ENCODE measurements at regions of chr5 and their contacts with region 1.

Region 1: DNA sequence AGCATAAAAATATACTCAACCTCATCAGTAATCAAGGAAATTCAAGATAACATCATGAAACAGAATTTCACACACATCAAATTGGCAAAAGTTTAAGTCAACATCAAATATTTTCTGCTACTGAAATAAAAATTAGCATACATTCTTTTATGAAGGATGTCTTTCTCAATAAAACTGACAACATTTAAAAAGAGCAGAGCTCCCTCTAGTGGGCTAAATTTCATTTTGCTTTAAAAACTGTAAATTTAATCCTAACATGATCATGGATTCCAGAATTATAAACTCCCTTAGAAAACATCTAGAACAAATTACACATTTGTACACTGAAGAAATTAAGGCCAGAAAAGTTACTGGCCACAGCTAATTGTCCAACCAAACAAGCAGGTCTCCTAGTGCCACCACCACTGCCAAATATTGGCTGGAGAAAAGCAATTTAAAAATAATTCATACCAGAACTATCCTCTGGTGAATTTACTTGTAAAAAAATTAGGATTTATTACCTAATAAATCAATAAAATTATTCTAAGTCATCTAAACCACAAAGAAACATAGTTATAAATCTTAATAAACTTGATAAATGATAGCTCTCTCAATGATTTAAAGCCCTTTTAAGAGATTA is 31.2 kb downstream of the DEPDC1B start:
- DNase-seq: peak in 1 of 2 experiments; percentile 38
- H3K4me3 ChIP-seq: no peak overlapping the region
- H3K4me3 Mint-ChIP-seq: no peak overlapping the region
- H3K27ac Mint-ChIP-seq: no peak overlapping the region
- H3K4me1 ChIP-seq: peaks cover 39% of the 10 kb centered on the region
- H3K4me1 Mint-ChIP-seq: peaks cover 33% of the 10 kb centered on the region
- H3K27me3 ChIP-seq: no peaks in the 10 kb centered on the region
- H3K27me3 Mint-ChIP-seq: no peaks in the 10 kb centered on the region
- CTCF ChIP-seq: peak; percentile 45 to 50

Region 2: GRCh38 chr5:59810041-59810440 is 858.8 kb before region 1 on chr5:
- CTCF ChIA-PET with region 1: no interaction called
- POLR2A ChIA-PET with region 1: no interaction called
- intact Hi-C with region 1: loop called (anchors 5 kb)
- DNase-seq: peak; percentile 60 to 61
- H3K4me3 ChIP-seq: no peak overlapping the region
- H3K4me3 Mint-ChIP-seq: peak overlapping the region; percentile 17
- H3K27ac Mint-ChIP-seq: no peak overlapping the region
- H3K4me1 ChIP-seq: 0 out of 2 replicates have a peak, but pooled peaks cover 5% of the 10 kb centered on the region
- H3K4me1 Mint-ChIP-seq: peaks cover 6% of the 10 kb centered on the region
- H3K27me3 ChIP-seq: no peaks in the 10 kb centered on the region
- H3K27me3 Mint-ChIP-seq: peaks cover 12% of the 10 kb centered on the region
- CTCF ChIP-seq: peak; percentile 89 to 94

Region 3: GRCh38 chr5:60649283-60649917 is 19.4 kb before region 1 on chr5:
- CTCF ChIA-PET with region 1: interaction called, 4 read pairs
- POLR2A ChIA-PET with region 1: no interaction called
- intact Hi-C with region 1: loop called (anchors 1 kb)
- DNase-seq: peak in 1 of 2 experiments; percentile 48
- H3K4me3 ChIP-seq: no peak overlapping the region
- H3K4me3 Mint-ChIP-seq: no peak overlapping the region
- H3K27ac Mint-ChIP-seq: no peak overlapping the region
- H3K4me1 ChIP-seq: 0 out of 2 replicates have a peak, but pooled peaks cover 5% of the 10 kb centered on the region
- H3K4me1 Mint-ChIP-seq: peaks cover 15% of the 10 kb centered on the region
- H3K27me3 ChIP-seq: no peaks in the 10 kb centered on the region
- H3K27me3 Mint-ChIP-seq: no peaks in the 10 kb centered on the region
- CTCF ChIP-seq: peak; percentile 71 to 79

Region 4: GRCh38 chr5:60699530-60700382 is 31.0 kb after region 1 on chr5 and contains the start of gene DEPDC1B:
- CTCF ChIA-PET with region 1: interaction called, 25 read pairs
- POLR2A ChIA-PET with region 1: interaction called, 16 read pairs
- intact Hi-C with region 1: loop called (anchors 1 kb)
- DNase-seq: peak; percentile 94 to 95
- H3K4me3 ChIP-seq: peak within 1 kb of the TSS; percentile 72
- H3K4me3 Mint-ChIP-seq: peak within 1 kb of the TSS; percentile 74
- H3K27ac Mint-ChIP-seq: peak within 1 kb of the TSS; percentile 90
- H3K4me1 ChIP-seq: peaks cover 13% of the 10 kb centered on the region
- H3K4me1 Mint-ChIP-seq: peaks cover 10% of the 10 kb centered on the region
- H3K27me3 ChIP-seq: no peaks in the 10 kb centered on the region
- H3K27me3 Mint-ChIP-seq: no peaks in the 10 kb centered on the region
- CTCF ChIP-seq: peak; percentile 25 to 57
- total RNA-seq, gene DEPDC1B: 44.9 and 46.7 TPM in 2 replicates

Region 5: DNA sequence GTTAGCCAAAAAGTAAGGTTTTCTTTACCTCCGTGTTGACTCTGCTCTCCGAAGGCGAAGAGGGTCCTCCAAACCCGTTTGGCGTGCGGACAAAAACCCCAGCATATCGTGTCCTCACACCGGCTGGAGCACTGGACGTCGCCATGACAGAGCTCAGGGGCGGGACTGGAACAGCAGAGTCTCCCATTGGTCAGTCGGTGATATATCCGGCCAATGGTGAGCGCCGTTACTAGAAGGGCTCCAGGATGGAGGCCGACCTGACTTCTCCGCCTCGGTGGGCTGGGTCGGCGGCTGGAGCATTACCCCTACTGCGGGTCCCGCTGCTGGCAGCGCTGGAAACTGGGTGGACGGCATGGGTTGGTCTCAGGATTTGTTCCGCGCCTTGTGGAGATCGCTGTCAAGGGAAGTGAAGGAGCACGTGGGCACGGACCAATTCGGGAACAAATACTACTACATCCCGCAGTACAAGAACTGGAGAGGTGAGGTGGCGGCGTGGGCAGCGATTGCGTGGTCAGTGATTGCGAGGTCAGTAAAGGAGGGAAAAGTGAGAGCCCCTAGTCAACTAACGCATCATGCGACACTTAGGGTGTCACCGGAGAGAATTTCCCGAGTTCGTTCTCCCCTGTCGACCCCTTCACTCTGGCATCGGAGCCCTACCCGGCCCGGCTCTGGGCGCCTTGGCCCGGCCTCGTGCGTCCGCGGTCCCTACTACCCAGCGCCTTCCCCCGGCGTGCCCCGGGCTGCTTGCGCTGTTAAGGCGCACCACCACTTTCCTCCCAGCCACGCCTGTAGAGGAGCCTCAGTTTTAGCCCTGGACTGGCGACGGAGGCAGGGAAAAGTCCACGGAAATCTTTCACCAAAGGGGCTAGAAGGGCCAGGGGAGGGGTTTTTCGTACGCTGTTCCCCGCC is 276.4 kb after region 1 on chr5 and contains the starts of genes ERCC8 and NDUFAF2:
- CTCF ChIA-PET with region 1: no interaction called
- POLR2A ChIA-PET with region 1: interaction called, 4 read pairs
- intact Hi-C with region 1: loop called (anchors 5 kb)
- DNase-seq: peak; percentile 93 to 94
- H3K4me3 ChIP-seq: peak within 1 kb of the TSS; percentile 42
- H3K4me3 Mint-ChIP-seq: no peak within 1 kb of the TSS
- H3K27ac Mint-ChIP-seq: no peak within 1 kb of the TSS
- H3K4me1 ChIP-seq: peaks cover 6% of the 10 kb centered on the region; the same call in 1 of the 2 replicates
- H3K4me1 Mint-ChIP-seq: no peaks in the 10 kb centered on the region
- H3K27me3 ChIP-seq: no peaks in the 10 kb centered on the region
- H3K27me3 Mint-ChIP-seq: no peaks in the 10 kb centered on the region
- CTCF ChIP-seq: no peak
- total RNA-seq, gene ERCC8: 18.3 and 19.8 TPM in 2 replicates
- total RNA-seq, gene NDUFAF2: 57.9 and 60.8 TPM in 2 replicates

Region 6: GRCh38 chr5:61933787-61934626 is 1265.2 kb after region 1 on chr5:
- CTCF ChIA-PET with region 1: no interaction called
- POLR2A ChIA-PET with region 1: no interaction called
- intact Hi-C with region 1: loop called (anchors 5 kb)
- DNase-seq: peak; percentile 46 to 55
- H3K4me3 ChIP-seq: no peak overlapping the region
- H3K4me3 Mint-ChIP-seq: no peak overlapping the region
- H3K27ac Mint-ChIP-seq: no peak overlapping the region
- H3K4me1 ChIP-seq: no peaks in the 10 kb centered on the region
- H3K4me1 Mint-ChIP-seq: no peaks in the 10 kb centered on the region
- H3K27me3 ChIP-seq: no peaks in the 10 kb centered on the region
- H3K27me3 Mint-ChIP-seq: peaks cover 5% of the 10 kb centered on the region
- CTCF ChIP-seq: peak; percentile 48 to 55